ENCODE measurements at regions of chr3 and their contacts with region 1.

Region 1: DNA sequence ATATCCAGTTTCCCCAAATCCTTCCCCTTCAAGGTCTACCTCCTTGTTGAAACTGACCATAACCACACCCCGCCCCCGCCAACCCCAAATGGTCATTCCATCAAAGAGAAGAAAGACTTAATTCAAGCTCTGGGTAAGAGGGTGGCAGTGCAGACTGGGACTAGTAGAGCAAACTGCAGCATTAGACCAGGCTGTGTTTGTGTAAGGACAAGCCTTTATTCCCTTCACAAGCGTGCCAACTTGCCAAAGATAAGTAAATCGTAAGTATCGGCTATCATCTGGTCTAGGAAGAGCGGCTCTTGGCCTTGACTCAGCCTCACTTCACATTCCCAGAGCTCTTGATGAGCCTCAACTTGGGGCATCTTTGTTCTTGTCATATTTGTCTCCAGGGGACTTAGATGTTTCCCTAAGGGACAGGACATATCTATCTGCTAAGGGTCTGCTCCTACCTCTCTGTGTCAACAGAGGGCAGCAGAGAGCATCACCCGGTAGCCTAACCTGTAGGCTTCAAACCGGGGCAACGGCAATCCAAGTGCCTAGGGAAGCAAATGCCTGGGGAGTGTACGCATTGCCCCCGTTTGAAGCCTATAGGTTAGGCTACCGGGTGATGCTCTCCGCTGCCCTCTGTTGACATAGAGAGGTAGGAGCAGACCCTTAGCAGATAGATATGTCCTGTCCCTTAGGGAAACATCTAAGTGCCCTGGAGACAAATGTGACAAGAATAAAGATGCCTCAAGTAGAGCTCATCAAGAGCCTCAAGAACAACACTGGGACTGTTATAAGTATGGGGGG is 8.9 kb upstream of the MAP3K13 start:
- DNase-seq: peak; percentile 78 to 82
- H3K4me3 ChIP-seq: no peak overlapping the region
- H3K27ac ChIP-seq: no peak overlapping the region
- H3K4me1 ChIP-seq: no peaks in the 10 kb centered on the region
- H3K27me3 ChIP-seq: no peaks in the 10 kb centered on the region
- CTCF ChIP-seq: peak; percentile 92

Region 2: DNA sequence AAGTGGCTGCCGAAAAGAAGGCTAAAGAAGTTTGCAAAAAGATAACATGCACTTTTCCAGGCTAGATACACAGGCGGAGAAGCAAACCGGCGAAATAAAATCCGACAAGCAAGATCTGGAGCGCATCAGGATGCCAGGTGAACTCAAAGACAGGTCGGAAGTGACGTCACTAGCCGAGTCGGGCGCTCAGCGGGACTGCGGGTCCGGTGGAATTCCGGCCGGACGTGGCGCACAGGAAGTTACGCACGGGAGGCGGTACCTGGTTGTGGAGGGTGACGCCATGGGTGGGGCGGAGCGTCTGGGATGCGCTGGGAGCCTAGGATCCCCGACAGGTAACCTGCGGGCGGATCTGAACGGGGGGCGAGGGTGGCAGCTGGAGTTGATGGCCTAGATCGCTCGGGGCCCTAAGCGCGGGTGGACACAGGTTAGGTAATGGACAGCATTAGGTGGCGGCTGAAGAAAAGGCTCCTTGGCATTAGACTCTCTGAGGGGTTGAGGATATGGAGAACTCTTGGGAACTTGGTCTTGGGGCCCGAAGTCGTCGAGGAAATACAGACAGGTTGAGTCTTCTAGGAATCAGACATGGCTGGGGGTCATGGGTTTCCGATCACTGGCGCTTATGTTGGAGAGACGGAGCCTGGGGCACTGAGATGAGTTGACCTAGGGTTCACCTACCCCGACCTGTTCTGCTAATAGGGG is 71.2 kb before region 1 on chr3:
- CTCF ChIA-PET with region 1: interaction called, 8 read pairs
- POLR2A ChIA-PET with region 1: no interaction called
- intact Hi-C with region 1: loop called (anchors 2 kb)
- DNase-seq: peak; percentile 96 to 98
- H3K4me3 ChIP-seq: peak overlapping the region; percentile 95
- H3K27ac ChIP-seq: peak overlapping the region; percentile 55
- H3K4me1 ChIP-seq: peaks cover 8% of the 10 kb centered on the region
- H3K27me3 ChIP-seq: no peaks in the 10 kb centered on the region
- CTCF ChIP-seq: no peak

Region 3: DNA sequence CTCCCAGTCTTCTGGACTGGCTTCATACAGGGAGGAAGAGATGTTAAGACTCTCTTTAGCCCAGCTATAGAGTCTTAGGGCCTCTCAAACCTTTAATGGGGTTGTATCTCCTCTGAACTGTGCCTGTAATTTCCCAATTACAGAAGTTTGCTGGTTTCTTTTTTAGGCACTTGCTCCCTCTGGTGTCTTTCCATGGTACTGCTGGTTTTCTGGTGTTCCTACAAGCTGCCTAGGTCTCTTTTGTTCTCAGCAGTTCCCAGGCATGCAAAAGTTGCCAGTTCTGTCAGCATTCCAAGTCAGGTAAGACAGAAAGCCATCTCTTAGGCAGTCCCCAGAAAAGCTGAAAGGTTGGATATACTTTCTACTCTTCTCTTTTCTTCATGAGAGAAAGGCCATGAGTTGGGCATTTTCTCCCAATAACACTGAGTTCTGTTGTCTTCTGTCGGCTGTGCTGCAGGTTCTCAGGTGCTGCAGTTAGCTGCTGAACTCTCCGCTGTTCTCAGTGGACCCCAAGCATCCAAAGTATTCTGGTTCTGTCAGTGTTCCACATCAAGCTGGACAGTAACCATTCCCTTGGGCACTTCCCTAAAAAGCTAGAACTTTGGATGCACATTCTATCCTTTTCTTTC is 45.8 kb before region 1 on chr3:
- CTCF ChIA-PET with region 1: interaction called, 5 read pairs
- POLR2A ChIA-PET with region 1: no interaction called
- intact Hi-C with region 1: loop called (anchors 1 kb)
- DNase-seq: peak; percentile 69 to 74
- H3K4me3 ChIP-seq: no peak overlapping the region
- H3K27ac ChIP-seq: no peak overlapping the region
- H3K4me1 ChIP-seq: no peaks in the 10 kb centered on the region
- H3K27me3 ChIP-seq: no peaks in the 10 kb centered on the region
- CTCF ChIP-seq: peak; percentile 94

Region 4: DNA sequence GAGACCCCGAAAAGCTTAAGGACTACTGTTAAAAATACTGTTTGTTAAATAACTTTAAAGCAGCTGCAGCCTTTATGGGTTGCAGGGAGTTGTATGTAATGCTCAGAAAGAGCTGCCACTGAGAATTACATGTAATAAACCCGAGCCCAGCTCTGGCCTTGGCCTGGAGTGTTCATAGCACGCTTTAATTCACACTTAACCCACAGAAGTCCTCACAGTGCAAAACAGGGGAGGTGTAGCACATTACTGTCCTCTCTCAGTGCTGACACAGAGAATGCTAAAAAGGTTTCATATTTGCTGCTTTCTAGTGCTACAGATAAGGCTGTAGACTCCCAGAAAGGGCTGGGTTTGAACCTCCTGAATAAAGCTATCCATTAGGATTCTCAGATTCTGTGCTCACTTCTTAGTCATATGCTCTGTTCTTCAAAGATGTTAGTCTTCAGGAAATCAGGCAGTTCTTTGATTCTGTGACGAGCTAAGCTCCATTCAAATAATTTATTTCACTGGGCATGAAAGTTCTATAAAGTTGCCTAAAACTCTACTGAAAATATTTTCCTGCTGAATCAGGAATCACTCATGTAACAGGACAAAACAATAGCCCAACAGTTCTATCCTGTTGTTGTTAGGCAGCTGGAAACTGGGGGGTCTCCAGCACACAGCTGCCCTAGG is 340.1 kb after region 1 on chr3:
- CTCF ChIA-PET with region 1: no interaction called
- POLR2A ChIA-PET with region 1: no interaction called
- intact Hi-C with region 1: no loop called
- DNase-seq: no peak
- H3K4me3 ChIP-seq: no peak overlapping the region
- H3K27ac ChIP-seq: 0 out of 2 replicates have a peak overlapping the region, but pooled peaks have one; percentile 4
- H3K4me1 ChIP-seq: peaks cover 20% of the 10 kb centered on the region
- H3K27me3 ChIP-seq: no peaks in the 10 kb centered on the region
- CTCF ChIP-seq: no peak

Measured in PC-9 (cell line).